Posterior vena cava (tissue), 2 donors: ENCODE measurements at regions of chr17 and their contacts with region 1.

Region 1: GRCh38 chr17:6843241-6843880 is 11.8 kb upstream of the TEKT1 start:
- DNase-seq: no peak

Region 2: DNA sequence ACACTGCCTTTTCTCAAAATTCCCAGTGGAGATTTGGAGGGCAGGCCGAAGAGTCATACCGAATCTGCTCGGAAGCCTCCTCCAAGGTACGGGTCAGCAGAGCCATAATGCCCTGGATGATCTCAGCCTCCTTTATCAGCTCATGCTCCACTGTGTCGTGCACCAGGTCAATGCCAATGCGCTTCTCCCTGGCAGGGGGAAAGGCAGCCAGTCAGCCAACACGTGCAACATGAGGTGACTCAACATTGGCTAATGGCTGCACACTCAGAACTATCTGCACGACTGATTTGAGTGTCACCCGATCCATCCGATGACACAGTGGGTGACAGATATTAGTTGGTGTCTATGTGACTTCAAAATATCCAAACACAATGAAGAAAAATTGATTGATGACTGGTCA is 27.6 kb before region 1 on chr17:
- intact Hi-C with region 1: no loop called
- DNase-seq: no peak

Region 3: DNA sequence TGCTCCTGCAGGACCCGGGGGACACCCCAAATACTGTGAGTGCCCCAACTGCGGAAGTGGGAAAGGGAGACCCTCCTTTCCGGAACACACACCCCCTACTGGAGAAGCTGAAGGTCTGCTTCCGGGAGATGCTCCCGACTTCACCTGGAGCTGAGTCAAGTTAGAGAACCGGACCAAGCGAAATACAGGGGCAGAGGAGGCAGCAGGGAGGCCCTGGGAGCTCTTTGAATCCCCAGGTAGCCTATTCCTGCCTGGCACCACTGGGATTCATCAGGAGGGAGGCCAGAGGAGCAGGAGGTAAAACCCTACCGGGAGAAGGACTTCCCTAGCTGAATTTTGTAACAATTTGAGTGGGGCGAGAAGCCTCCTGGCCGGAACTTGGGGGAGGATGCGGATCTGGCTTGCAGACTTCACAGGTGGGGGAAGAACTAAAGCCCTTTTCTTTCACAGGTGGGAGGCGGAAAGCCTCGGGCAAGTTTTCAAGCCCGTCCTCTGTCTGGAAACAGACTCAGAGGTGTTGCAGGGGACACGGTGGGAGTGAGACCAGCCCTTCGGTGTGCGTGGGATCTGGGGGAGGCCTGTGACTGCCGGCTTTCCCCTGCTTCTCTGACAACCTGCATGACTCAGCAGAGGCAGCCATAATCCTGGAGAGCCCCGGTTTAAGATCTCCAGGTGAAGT is 10.5 kb after region 1 on chr17:
- intact Hi-C with region 1: loop called in 1 of 2 experiments (anchors 1 kb)
- DNase-seq: no peak

Region 4: GRCh38 chr17:6924208-6924607 is 80.8 kb after region 1 on chr17:
- intact Hi-C with region 1: no loop called
- DNase-seq: no peak